CD4-positive, alpha-beta memory T cell (primary cell): ENCODE measurements at regions of chr5 and their contacts with region 1.

Region 1: GRCh38 chr5:59799668-59800346 is 93.7 kb downstream of the PDE4D start:
- DNase-seq: peak in 4 of 5 donors; percentile 38 to 45 (median 43)
- H3K4me3 ChIP-seq: no peak overlapping the region
- H3K4me3 Mint-ChIP-seq: no peak overlapping the region
- H3K27ac ChIP-seq: no peak overlapping the region
- H3K27ac Mint-ChIP-seq: no peak overlapping the region
- H3K4me1 ChIP-seq: peaks cover 15% of the 10 kb centered on the region
- H3K4me1 Mint-ChIP-seq: no peaks in the 10 kb centered on the region
- H3K27me3 ChIP-seq: no peaks in the 10 kb centered on the region
- H3K27me3 Mint-ChIP-seq: peaks cover 2 to 3% of the 10 kb centered on the region in 2 donors

Region 2: GRCh38 chr5:59390074-59390659 is 409.6 kb before region 1 on chr5:
- CTCF ChIA-PET with region 1: interaction called, 76 read pairs
- POLR2A ChIA-PET with region 1: no interaction called
- intact Hi-C with region 1: no loop called
- DNase-seq: peak in 2 of 5 donors; percentile 11 to 25
- H3K4me3 ChIP-seq: no peak overlapping the region
- H3K4me3 Mint-ChIP-seq: no peak overlapping the region
- H3K27ac ChIP-seq: no peak overlapping the region
- H3K27ac Mint-ChIP-seq: no peak overlapping the region
- H3K4me1 ChIP-seq: no peaks in the 10 kb centered on the region
- H3K4me1 Mint-ChIP-seq: no peaks in the 10 kb centered on the region
- H3K27me3 ChIP-seq: no peaks in the 10 kb centered on the region
- H3K27me3 Mint-ChIP-seq: peaks cover 2 to 16% of the 10 kb centered on the region in 2 donors

Region 3: GRCh38 chr5:59506285-59506877 is 293.4 kb before region 1 on chr5:
- CTCF ChIA-PET with region 1: no interaction called
- POLR2A ChIA-PET with region 1: no interaction called
- intact Hi-C with region 1: loop called (anchors 2 kb)
- DNase-seq: no peak
- H3K4me3 ChIP-seq: no peak overlapping the region
- H3K4me3 Mint-ChIP-seq: no peak overlapping the region
- H3K27ac ChIP-seq: no peak overlapping the region
- H3K27ac Mint-ChIP-seq: no peak overlapping the region
- H3K4me1 ChIP-seq: no peaks in the 10 kb centered on the region
- H3K4me1 Mint-ChIP-seq: no peaks in the 10 kb centered on the region
- H3K27me3 ChIP-seq: no peaks in the 10 kb centered on the region
- H3K27me3 Mint-ChIP-seq: peaks cover 0 to 1% of the 10 kb centered on the region in 2 donors

Region 4: GRCh38 chr5:59673438-59674058 is 126.3 kb before region 1 on chr5:
- CTCF ChIA-PET with region 1: interaction called, 3 read pairs
- POLR2A ChIA-PET with region 1: no interaction called
- intact Hi-C with region 1: loop called (anchors 5 kb)
- DNase-seq: peak in 4 of 5 donors; percentile 10 to 34 (median 21)
- H3K4me3 ChIP-seq: no peak overlapping the region
- H3K4me3 Mint-ChIP-seq: no peak overlapping the region
- H3K27ac ChIP-seq: no peak overlapping the region
- H3K27ac Mint-ChIP-seq: no peak overlapping the region
- H3K4me1 ChIP-seq: no peaks in the 10 kb centered on the region
- H3K4me1 Mint-ChIP-seq: peaks cover 0 to 2% (median under 1%) of the 10 kb centered on the region in 4 donors
- H3K27me3 ChIP-seq: no peaks in the 10 kb centered on the region
- H3K27me3 Mint-ChIP-seq: peaks cover 0 to 3% of the 10 kb centered on the region in 2 donors

Region 5: DNA sequence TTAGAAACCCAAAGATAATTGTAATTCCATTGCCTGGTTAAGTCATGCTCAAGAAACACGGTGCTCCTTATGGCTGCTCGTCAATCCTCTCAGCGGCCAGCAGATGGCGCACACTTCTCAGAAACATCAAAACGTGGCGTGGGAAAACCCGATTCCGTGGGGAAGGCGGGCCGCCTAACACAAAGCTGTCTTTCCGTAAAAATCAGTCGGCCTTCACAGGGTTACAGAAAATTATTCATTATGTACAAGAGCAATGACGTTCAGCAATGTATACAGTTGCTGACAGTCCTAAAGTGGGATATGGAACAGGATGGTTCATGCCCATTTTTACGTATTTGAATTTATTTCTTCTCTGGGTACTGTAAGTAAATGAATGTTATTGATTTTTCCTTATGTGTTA is 10.2 kb after region 1 on chr5:
- CTCF ChIA-PET with region 1: interaction called, 26 read pairs
- POLR2A ChIA-PET with region 1: no interaction called
- intact Hi-C with region 1: no loop called
- DNase-seq: peak; percentile 32 to 44 (median 40)
- H3K4me3 ChIP-seq: no peak overlapping the region
- H3K4me3 Mint-ChIP-seq: peak overlapping the region in 3 of 8 donors; percentile 14 to 78 (median 32)
- H3K27ac ChIP-seq: no peak overlapping the region
- H3K27ac Mint-ChIP-seq: no peak overlapping the region
- H3K4me1 ChIP-seq: no peaks in the 10 kb centered on the region
- H3K4me1 Mint-ChIP-seq: peaks cover 2 to 4% (median 3%) of the 10 kb centered on the region in 4 donors
- H3K27me3 ChIP-seq: peaks cover 6% of the 10 kb centered on the region
- H3K27me3 Mint-ChIP-seq: peaks cover 6 to 18% of the 10 kb centered on the region in 2 donors